ENCODE measurements at regions of chr15 and their contacts with region 1.

Region 1: GRCh38 chr15:99631255-99631654 is 65.5 kb downstream of the MEF2A start:
- DNase-seq: peak; percentile 77 to 88 (median 86)
- H3K4me3 ChIP-seq: peak overlapping the region in 1 of 3 experiments; percentile 33
- H3K4me3 Mint-ChIP-seq: peak overlapping the region in 1 of 2 donors; percentile 81
- H3K27ac ChIP-seq: peak overlapping the region; percentile 66 to 97
- H3K27ac Mint-ChIP-seq: peak overlapping the region; percentile 92 to 98 (median 96)
- H3K4me1 ChIP-seq: peaks cover 29 to 53% of the 10 kb centered on the region in 2 donors
- H3K4me1 Mint-ChIP-seq: peaks cover 55% of the 10 kb centered on the region
- H3K27me3 ChIP-seq: no peaks in the 10 kb centered on the region
- H3K27me3 Mint-ChIP-seq: no peaks in the 10 kb centered on the region
- CTCF ChIP-seq: no peak

Region 2: DNA sequence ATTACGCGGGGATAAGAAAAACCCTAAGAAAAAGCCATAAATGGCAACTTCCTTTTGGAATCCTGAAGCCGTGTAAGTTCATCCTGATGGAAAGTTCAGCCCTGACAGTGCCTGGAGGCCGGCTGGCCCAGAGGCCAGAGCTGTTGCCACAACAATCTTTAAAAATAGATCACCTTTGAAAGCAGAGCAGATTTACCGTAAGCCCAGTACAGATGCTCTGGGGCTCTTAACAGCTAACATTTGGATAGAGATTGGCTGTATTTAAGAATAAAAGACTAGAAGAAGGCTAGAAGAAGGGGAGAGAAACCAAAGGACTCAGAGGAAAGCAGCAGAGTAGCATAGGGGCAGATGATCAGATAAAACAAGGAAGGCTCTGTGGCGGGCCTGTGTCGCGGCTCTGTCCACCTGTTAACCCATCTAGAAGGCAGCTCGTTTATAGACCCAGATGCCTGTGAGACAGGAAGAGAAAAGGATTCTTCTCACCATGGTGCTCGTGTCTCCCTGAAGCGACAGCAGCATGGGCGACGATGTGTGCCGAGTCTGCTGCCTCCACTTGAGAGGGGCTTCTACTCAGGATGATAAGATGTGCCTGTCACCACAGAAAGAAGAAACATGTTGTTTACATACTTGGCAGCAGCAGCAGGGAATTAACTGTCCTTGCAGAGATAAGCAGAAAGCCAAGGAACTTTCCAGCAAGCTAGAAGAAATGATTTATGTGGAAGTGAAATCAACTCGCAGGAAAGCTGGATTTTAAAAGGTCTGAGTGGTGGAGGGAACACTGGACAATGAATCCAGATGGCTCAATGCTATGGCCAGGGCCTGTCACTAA is 456.5 kb before region 1 on chr15:
- intact Hi-C with region 1: no loop called
- DNase-seq: no peak
- H3K4me3 ChIP-seq: no peak overlapping the region
- H3K4me3 Mint-ChIP-seq: no peak overlapping the region
- H3K27ac ChIP-seq: no peak overlapping the region
- H3K27ac Mint-ChIP-seq: peak overlapping the region in 1 of 7 donors; percentile 76
- H3K4me1 ChIP-seq: no peaks in the 10 kb centered on the region
- H3K4me1 Mint-ChIP-seq: no peaks in the 10 kb centered on the region
- H3K27me3 ChIP-seq: no peaks in the 10 kb centered on the region
- H3K27me3 Mint-ChIP-seq: no peaks in the 10 kb centered on the region
- CTCF ChIP-seq: no peak

Region 3: GRCh38 chr15:99424978-99425656 is 206.1 kb before region 1 on chr15:
- intact Hi-C with region 1: loop called in 1 of 2 experiments (anchors 5 kb)
- DNase-seq: peak; percentile 88 to 95 (median 89)
- H3K4me3 ChIP-seq: peak overlapping the region in 1 of 3 experiments; percentile 39
- H3K4me3 Mint-ChIP-seq: peak overlapping the region in 1 of 2 donors; percentile 51
- H3K27ac ChIP-seq: peak overlapping the region; percentile 82 to 90
- H3K27ac Mint-ChIP-seq: peak overlapping the region; percentile 87 to 96 (median 90)
- H3K4me1 ChIP-seq: peaks cover 20% of the 10 kb centered on the region in 2 donors
- H3K4me1 Mint-ChIP-seq: peaks cover 28% of the 10 kb centered on the region
- H3K27me3 ChIP-seq: no peaks in the 10 kb centered on the region
- H3K27me3 Mint-ChIP-seq: peaks cover 2 to 8% (median 6%) of the 10 kb centered on the region in 3 donors
- CTCF ChIP-seq: no peak

Region 4: GRCh38 chr15:99749386-99749785 is 118.1 kb after region 1 on chr15:
- intact Hi-C with region 1: no loop called
- DNase-seq: no peak
- H3K4me3 ChIP-seq: no peak overlapping the region
- H3K4me3 Mint-ChIP-seq: no peak overlapping the region
- H3K27ac ChIP-seq: no peak overlapping the region
- H3K27ac Mint-ChIP-seq: no peak overlapping the region
- H3K4me1 ChIP-seq: no peaks in the 10 kb centered on the region
- H3K4me1 Mint-ChIP-seq: no peaks in the 10 kb centered on the region
- H3K27me3 ChIP-seq: no peaks in the 10 kb centered on the region
- H3K27me3 Mint-ChIP-seq: peaks cover 0 to 7% (median 0%) of the 10 kb centered on the region in 3 donors
- CTCF ChIP-seq: no peak

Measured in CD14-positive monocyte (primary cell).